Naive thymus-derived CD4-positive, alpha-beta T cell (primary cell): ENCODE measurements at regions of chr10 and their contacts with region 1.

Region 1: GRCh38 chr10:17257466-17258321 is 29.7 kb downstream of the VIM start:
- DNase-seq: peak in 8 of 9 donors; percentile 15 to 71 (median 58)
- ATAC-seq: peak; percentile 88
- H3K4me3 ChIP-seq: no peak overlapping the region
- H3K4me3 Mint-ChIP-seq: peak overlapping the region in 3 of 10 donors; percentile 39 to 55 (median 51)
- H3K27ac ChIP-seq: no peak overlapping the region
- H3K27ac Mint-ChIP-seq: peak overlapping the region in 1 of 9 donors; percentile 38
- H3K4me1 ChIP-seq: no peaks in the 10 kb centered on the region
- H3K4me1 Mint-ChIP-seq: peaks cover 5 to 13% (median 6%) of the 10 kb centered on the region in 7 donors
- H3K27me3 ChIP-seq: no peaks in the 10 kb centered on the region
- H3K27me3 Mint-ChIP-seq: no peaks in the 10 kb centered on the region

Region 2: GRCh38 chr10:15859906-15860691 is 1397.6 kb before region 1 on chr10 and contains the start of gene MINDY3:
- CTCF ChIA-PET with region 1: no interaction called
- POLR2A ChIA-PET with region 1: no interaction called
- intact Hi-C with region 1: loop called in 1 of 2 experiments (anchors 10 kb)
- DNase-seq: peak; percentile 54 to 86 (median 82)
- ATAC-seq: peak; percentile 94
- H3K4me3 ChIP-seq: peak within 1 kb of the TSS; percentile 97
- H3K4me3 Mint-ChIP-seq: peak within 1 kb of the TSS; percentile 95 to 100 (median 98)
- H3K27ac ChIP-seq: peak within 1 kb of the TSS; percentile 55
- H3K27ac Mint-ChIP-seq: peak within 1 kb of the TSS; percentile 90 to 96 (median 93)
- H3K4me1 ChIP-seq: peaks cover 10 to 22% of the 10 kb centered on the region in 2 donors
- H3K4me1 Mint-ChIP-seq: peaks cover 25 to 53% (median 45%) of the 10 kb centered on the region in 7 donors
- H3K27me3 ChIP-seq: no peaks in the 10 kb centered on the region
- H3K27me3 Mint-ChIP-seq: peaks cover 19 to 24% (median 22%) of the 10 kb centered on the region in 5 donors
- total RNA-seq, gene MINDY3: 21.4 to 43.8 (median 37.4) TPM

Region 3: DNA sequence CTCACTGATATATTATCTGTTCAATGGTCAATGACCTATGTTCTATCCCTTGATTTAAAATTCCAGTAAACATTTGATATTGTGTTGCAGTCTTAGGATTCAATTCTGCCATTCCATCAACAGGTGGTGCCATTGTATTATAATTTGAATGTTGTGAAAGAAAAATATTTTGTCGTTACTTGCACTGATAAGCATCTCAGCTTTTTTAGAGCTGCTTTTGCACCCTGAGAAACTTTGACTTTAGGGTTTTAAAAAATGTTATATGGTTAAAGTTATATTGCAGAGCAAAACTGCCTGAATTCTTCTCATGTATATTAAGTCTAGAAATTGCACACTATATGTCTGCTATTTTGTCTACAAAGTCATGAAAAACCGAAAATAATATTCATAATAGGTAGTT is 1378.6 kb before region 1 on chr10:
- CTCF ChIA-PET with region 1: no interaction called
- POLR2A ChIA-PET with region 1: no interaction called
- intact Hi-C with region 1: loop called in 1 of 2 experiments (anchors 5 kb)
- DNase-seq: peak in 5 of 9 donors; percentile 14 to 38 (median 34)
- ATAC-seq: peak; percentile 44
- H3K4me3 ChIP-seq: no peak overlapping the region
- H3K4me3 Mint-ChIP-seq: no peak overlapping the region
- H3K27ac ChIP-seq: no peak overlapping the region
- H3K27ac Mint-ChIP-seq: no peak overlapping the region
- H3K4me1 ChIP-seq: no peaks in the 10 kb centered on the region
- H3K4me1 Mint-ChIP-seq: no peaks in the 10 kb centered on the region
- H3K27me3 ChIP-seq: no peaks in the 10 kb centered on the region
- H3K27me3 Mint-ChIP-seq: peaks cover 42 to 72% (median 54%) of the 10 kb centered on the region in 5 donors

Region 4: GRCh38 chr10:16828114-16828568 is 429.6 kb before region 1 on chr10:
- CTCF ChIA-PET with region 1: interaction called, 16 read pairs
- POLR2A ChIA-PET with region 1: no interaction called
- intact Hi-C with region 1: loop called (anchors 1 kb)
- DNase-seq: peak; percentile 22 to 78 (median 69)
- ATAC-seq: peak; percentile 96
- H3K4me3 ChIP-seq: no peak overlapping the region
- H3K4me3 Mint-ChIP-seq: no peak overlapping the region
- H3K27ac ChIP-seq: no peak overlapping the region
- H3K27ac Mint-ChIP-seq: peak overlapping the region in 3 of 9 donors; percentile 63 to 84 (median 82)
- H3K4me1 ChIP-seq: no peaks in the 10 kb centered on the region
- H3K4me1 Mint-ChIP-seq: peaks cover 0 to 12% (median 8%) of the 10 kb centered on the region in 7 donors
- H3K27me3 ChIP-seq: no peaks in the 10 kb centered on the region
- H3K27me3 Mint-ChIP-seq: peaks cover 0 to 9% (median 0%) of the 10 kb centered on the region in 5 donors

Region 5: DNA sequence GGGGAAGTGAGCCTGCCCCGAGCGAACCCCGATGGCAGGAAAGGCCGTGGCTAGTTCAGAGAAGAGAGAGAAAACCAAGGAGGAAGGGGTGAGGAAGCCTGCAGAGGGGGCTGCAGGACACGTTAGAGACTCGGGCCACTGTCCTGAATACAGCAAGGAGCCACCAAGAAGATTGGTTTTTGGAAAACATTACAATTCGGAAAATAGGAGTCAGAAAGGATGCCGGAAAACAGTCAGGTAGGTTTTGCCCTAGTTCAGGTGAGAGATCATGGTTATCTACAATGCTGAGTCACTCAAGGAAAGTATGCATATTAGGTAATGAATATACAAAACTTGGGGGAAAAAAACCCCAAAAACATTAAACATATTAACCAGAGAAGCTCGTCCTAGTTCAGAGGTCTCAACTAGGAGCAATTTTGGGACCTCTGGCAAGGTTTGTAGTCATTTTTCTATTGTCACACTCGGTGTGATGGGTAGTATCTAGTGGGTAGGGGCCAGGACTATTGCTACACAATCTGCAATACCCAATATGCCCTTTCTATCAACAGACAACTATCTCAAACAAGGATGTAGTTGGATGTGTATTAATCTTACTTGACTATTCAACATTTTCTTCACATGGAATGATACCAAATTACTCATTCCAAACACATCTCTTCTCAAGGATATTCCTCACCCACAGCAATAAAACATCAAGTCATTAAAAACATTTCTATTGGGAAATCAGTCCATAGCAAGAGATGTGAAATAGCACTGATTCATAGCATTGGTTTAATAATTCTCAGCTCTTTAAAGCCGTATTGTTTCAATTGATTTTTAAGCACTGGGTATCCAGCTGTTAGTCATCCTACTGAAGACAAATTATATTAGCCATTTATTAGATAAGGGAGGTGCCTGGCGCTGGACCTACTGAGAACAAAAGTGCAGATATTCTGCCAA is 366.1 kb before region 1 on chr10:
- CTCF ChIA-PET with region 1: no interaction called
- POLR2A ChIA-PET with region 1: no interaction called
- intact Hi-C with region 1: loop called (anchors 1 to 5 kb)
- DNase-seq: peak in 3 of 9 donors; percentile 7 to 18 (median 15)
- ATAC-seq: peak; percentile 69
- H3K4me3 ChIP-seq: no peak overlapping the region
- H3K4me3 Mint-ChIP-seq: peak overlapping the region; percentile 35 to 81 (median 58)
- H3K27ac ChIP-seq: no peak overlapping the region
- H3K27ac Mint-ChIP-seq: peak overlapping the region in 2 of 9 donors; percentile 40 to 49
- H3K4me1 ChIP-seq: no peaks in the 10 kb centered on the region
- H3K4me1 Mint-ChIP-seq: peaks cover 5 to 9% (median 5%) of the 10 kb centered on the region in 7 donors
- H3K27me3 ChIP-seq: no peaks in the 10 kb centered on the region
- H3K27me3 Mint-ChIP-seq: peaks cover 0 to 42% (median 0%) of the 10 kb centered on the region in 5 donors

Region 6: DNA sequence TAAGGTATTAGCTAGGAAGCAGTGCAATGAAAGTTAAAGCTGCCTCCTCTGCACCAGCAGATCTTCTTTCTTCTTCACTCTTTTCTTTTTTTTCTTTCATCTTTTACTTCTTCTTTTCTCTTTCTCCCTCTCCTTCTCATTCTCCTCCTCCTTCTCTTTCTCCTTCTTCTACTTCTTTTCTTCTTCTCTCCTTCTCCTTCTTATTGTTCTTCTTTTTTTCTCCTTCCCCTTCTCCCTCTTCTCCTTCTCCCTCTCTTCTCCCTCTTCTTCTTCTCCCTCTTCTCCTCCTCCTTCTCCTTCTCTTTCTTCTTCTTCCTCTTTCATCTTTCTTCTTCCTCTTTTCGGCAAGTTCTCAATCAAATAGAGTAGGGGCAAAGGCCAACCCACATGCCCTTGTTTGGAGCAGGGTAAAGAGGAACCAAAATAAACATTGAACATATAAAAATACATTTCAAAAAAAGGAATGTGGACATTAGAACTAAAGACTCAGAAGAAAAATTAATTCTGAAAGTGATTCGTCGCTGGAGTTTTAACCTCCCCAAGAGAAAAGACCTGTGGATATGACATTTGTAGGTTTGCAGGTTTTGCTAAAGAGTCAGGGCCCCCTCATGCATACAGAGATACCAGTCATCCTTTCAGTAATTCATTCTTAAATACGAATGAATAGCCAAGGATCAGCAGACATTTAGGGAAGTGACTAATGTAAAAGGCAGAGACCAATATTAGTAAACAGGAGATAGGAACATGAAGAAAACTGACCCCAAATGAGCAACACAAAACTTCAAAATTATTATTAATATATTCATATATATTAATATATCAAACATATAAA is 347.5 kb before region 1 on chr10:
- CTCF ChIA-PET with region 1: no interaction called
- POLR2A ChIA-PET with region 1: no interaction called
- intact Hi-C with region 1: loop called in 1 of 2 experiments (anchors 1 kb)
- DNase-seq: no peak
- ATAC-seq: peak; percentile 59
- H3K4me3 ChIP-seq: no peak overlapping the region
- H3K4me3 Mint-ChIP-seq: no peak overlapping the region
- H3K27ac ChIP-seq: no peak overlapping the region
- H3K27ac Mint-ChIP-seq: peak overlapping the region in 1 of 9 donors; percentile 46
- H3K4me1 ChIP-seq: no peaks in the 10 kb centered on the region
- H3K4me1 Mint-ChIP-seq: peaks cover 0 to 7% (median 3%) of the 10 kb centered on the region in 7 donors
- H3K27me3 ChIP-seq: no peaks in the 10 kb centered on the region
- H3K27me3 Mint-ChIP-seq: peaks cover 0 to 22% (median 0%) of the 10 kb centered on the region in 5 donors

Region 7: GRCh38 chr10:17756557-17757217 is 499.0 kb after region 1 on chr10:
- CTCF ChIA-PET with region 1: no interaction called
- POLR2A ChIA-PET with region 1: no interaction called
- intact Hi-C with region 1: no loop called
- DNase-seq: no peak
- ATAC-seq: peak; percentile 27
- H3K4me3 ChIP-seq: no peak overlapping the region
- H3K4me3 Mint-ChIP-seq: peak overlapping the region in 2 of 10 donors; percentile 11 to 62
- H3K27ac ChIP-seq: no peak overlapping the region
- H3K27ac Mint-ChIP-seq: no peak overlapping the region
- H3K4me1 ChIP-seq: no peaks in the 10 kb centered on the region
- H3K4me1 Mint-ChIP-seq: peaks cover 0 to 9% (median 0%) of the 10 kb centered on the region in 7 donors
- H3K27me3 ChIP-seq: no peaks in the 10 kb centered on the region
- H3K27me3 Mint-ChIP-seq: no peaks in the 10 kb centered on the region